Sciatic nerve (tissue), 2 donors: ENCODE measurements at regions of chr7 and their contacts with region 1.

Region 1: DNA sequence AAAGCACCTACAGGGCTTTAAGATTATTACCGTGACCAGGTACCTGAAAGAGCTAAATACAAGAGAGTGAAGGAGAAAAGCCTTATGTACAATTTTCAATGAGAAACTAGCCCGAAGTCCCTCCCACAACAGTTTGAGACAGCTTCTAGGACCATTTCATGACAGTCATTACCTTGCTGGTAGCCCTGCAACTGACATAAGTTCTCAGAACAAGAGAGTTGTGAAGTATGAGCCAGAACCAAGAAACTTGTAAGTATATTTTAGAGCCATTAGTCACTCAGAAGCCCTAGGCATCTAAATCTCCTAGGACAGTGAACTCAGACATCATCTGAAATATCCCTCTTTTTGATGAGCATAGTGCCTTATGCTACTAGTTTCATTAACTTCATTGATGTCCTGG is 792.1 kb downstream of the GRM8 start:
- DNase-seq: no peak
- ATAC-seq: no peak

Region 2: GRCh38 chr7:126445991-126446390 is 14.7 kb before region 1 on chr7:
- intact Hi-C with region 1: loop called (anchors 2 kb)
- DNase-seq: no peak
- ATAC-seq: no peak

Region 3: GRCh38 chr7:128311013-128311412 is 1850.3 kb after region 1 on chr7:
- intact Hi-C with region 1: no loop called
- DNase-seq: no peak
- ATAC-seq: no peak